Left ventricle myocardium inferior (tissue), 1 donor: ENCODE measurements at regions of chr9 and their contacts with region 1.

Region 1: GRCh38 chr9:102609461-102609860 is 385.7 kb upstream of the CYLC2 start:
- DNase-seq: no peak
- H3K4me3 ChIP-seq: no peak overlapping the region
- H3K27ac ChIP-seq: no peak overlapping the region
- H3K4me1 ChIP-seq: no peaks in the 10 kb centered on the region
- H3K27me3 ChIP-seq: no peaks in the 10 kb centered on the region
- CTCF ChIP-seq: no peak

Region 2: GRCh38 chr9:102461156-102461819 is 148.2 kb before region 1 on chr9:
- intact Hi-C with region 1: loop called (anchors 5 kb)
- DNase-seq: no peak
- H3K4me3 ChIP-seq: no peak overlapping the region
- H3K27ac ChIP-seq: no peak overlapping the region
- H3K4me1 ChIP-seq: no peaks in the 10 kb centered on the region
- H3K27me3 ChIP-seq: no peaks in the 10 kb centered on the region
- CTCF ChIP-seq: no peak

Region 3: GRCh38 chr9:102867488-102867887 is 258.0 kb after region 1 on chr9:
- intact Hi-C with region 1: no loop called
- DNase-seq: no peak
- H3K4me3 ChIP-seq: no peak overlapping the region
- H3K27ac ChIP-seq: peak overlapping the region; percentile 58
- H3K4me1 ChIP-seq: peaks cover 10% of the 10 kb centered on the region
- H3K27me3 ChIP-seq: no peaks in the 10 kb centered on the region
- CTCF ChIP-seq: no peak